Heart left ventricle (tissue), 16 donors: ENCODE measurements at regions of chr7 and their contacts with region 1.

Region 1: DNA sequence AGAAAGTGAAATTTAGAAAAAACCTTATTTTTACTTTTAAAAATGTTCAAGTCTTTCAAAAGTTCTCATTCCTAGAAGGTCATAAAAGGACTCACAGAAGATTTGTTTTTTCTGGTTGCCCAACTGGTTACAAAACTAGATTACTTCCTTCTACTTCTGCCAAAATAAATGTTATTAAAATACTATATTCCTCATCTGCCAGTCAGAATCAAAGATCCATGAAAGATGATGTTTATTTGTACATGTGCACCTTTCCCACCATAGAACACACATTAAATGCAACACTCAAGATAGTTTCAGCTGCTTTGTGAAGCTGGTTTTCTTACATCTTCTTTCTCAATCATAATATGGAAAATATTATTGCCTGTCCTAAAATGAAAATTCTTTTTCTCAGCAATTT is 465.4 kb downstream of the ETV1 start:
- DNase-seq: no peak
- ATAC-seq: no peak
- H3K4me3 ChIP-seq: peak overlapping the region in 1 of 12 donors; percentile 10
- H3K27ac ChIP-seq: no peak overlapping the region
- H3K4me1 ChIP-seq: no peaks in the 10 kb centered on the region
- H3K27me3 ChIP-seq: no peaks in the 10 kb centered on the region
- CTCF ChIP-seq: no peak
- POLR2A ChIP-seq: no peak

Region 2: DNA sequence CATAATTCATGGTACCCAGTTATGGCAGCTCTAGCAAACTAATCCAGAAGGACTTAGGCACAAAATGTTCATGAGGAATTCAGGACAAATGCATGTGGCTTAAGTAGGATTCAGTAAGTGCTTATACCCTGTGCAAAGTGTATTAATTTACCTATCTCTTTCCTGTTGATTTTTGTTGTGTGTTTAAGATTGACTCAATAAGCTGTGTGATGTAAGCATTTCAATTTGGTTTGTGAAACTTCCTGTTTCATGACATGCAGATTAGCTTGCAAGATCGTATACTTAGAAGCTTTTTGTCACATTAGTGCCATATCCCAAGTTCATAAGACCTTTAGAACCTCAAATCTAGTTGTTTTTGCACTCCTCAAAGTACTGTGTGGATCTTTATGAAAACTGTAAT is 419.9 kb before region 1 on chr7:
- intact Hi-C with region 1: no loop called
- DNase-seq: no peak
- ATAC-seq: no peak
- H3K4me3 ChIP-seq: no peak overlapping the region
- H3K27ac ChIP-seq: no peak overlapping the region
- H3K4me1 ChIP-seq: no peaks in the 10 kb centered on the region
- H3K27me3 ChIP-seq: no peaks in the 10 kb centered on the region
- CTCF ChIP-seq: no peak
- POLR2A ChIP-seq: no peak

Region 3: DNA sequence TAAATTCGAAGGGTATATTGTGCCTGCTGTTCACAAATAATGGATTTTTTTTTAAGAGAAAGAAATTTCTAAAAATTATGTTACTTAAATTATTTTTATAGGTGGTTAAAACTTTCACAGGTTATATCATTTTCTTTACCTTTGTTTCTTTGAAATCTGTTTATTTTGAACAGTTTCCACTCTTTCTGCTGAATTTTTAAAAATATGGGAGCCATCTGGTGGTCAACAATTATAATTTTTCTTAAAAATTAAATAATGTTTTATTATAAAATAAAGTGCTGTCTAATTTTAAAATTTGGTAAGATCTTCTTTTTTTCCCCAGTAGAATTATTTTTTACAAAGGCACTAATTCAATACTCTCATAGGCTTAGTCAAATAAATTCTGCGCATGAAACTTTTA is 201.5 kb after region 1 on chr7:
- intact Hi-C with region 1: loop called in 1 of 10 experiments (anchors 10 kb)
- DNase-seq: no peak
- ATAC-seq: no peak
- H3K4me3 ChIP-seq: no peak overlapping the region
- H3K27ac ChIP-seq: no peak overlapping the region
- H3K4me1 ChIP-seq: no peaks in the 10 kb centered on the region
- H3K27me3 ChIP-seq: no peaks in the 10 kb centered on the region
- CTCF ChIP-seq: peak in 5 of 12 donors; percentile 7 to 29 (median 9)
- POLR2A ChIP-seq: no peak

Region 4: DNA sequence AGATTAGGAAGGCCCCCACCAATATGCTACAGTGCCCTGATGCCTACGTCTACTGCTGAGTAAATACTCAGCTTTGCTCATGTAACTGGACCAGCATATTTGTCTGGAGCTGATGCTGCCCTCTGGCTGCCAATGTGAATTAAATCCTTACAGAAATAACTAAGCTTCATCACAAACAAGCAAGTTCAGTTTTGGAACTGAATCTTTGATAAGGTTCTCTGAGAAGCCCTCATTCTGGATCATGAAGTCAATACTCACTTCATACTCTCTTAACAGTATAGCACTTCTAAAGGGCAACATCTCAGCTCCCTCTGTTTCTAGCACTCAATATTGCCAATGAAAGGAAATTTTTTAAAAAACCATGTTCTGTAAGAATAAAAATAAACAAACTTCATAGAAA is 218.7 kb after region 1 on chr7:
- intact Hi-C with region 1: loop called in 4 of 10 experiments (anchors 5 to 10 kb)
- DNase-seq: peak in 3 of 5 donors; percentile 16 to 48 (median 29)
- ATAC-seq: peak in 3 of 4 donors; percentile 75 to 79 (median 78)
- H3K4me3 ChIP-seq: no peak overlapping the region
- H3K27ac ChIP-seq: peak overlapping the region in 1 of 12 donors; percentile 12
- H3K4me1 ChIP-seq: peaks cover 0 to 13% (median 7%) of the 10 kb centered on the region in 12 donors
- H3K27me3 ChIP-seq: no peaks in the 10 kb centered on the region
- CTCF ChIP-seq: peak; percentile 24 to 66 (median 52)
- POLR2A ChIP-seq: no peak

Region 5: GRCh38 chr7:14457568-14458453 is 933.7 kb after region 1 on chr7:
- intact Hi-C with region 1: loop called in 4 of 10 experiments (anchors 5 to 10 kb)
- DNase-seq: peak; percentile 66 to 72 (median 68)
- ATAC-seq: peak; percentile 73 to 85 (median 84)
- H3K4me3 ChIP-seq: peak overlapping the region in 3 of 12 donors; percentile 1 to 31 (median 22)
- H3K27ac ChIP-seq: peak overlapping the region in 2 of 12 donors; percentile 34 to 54
- H3K4me1 ChIP-seq: peaks cover 0 to 5% (median 0%) of the 10 kb centered on the region in 12 donors
- H3K27me3 ChIP-seq: no peaks in the 10 kb centered on the region
- CTCF ChIP-seq: peak; percentile 81 to 93 (median 88)
- POLR2A ChIP-seq: no peak

Region 6: DNA sequence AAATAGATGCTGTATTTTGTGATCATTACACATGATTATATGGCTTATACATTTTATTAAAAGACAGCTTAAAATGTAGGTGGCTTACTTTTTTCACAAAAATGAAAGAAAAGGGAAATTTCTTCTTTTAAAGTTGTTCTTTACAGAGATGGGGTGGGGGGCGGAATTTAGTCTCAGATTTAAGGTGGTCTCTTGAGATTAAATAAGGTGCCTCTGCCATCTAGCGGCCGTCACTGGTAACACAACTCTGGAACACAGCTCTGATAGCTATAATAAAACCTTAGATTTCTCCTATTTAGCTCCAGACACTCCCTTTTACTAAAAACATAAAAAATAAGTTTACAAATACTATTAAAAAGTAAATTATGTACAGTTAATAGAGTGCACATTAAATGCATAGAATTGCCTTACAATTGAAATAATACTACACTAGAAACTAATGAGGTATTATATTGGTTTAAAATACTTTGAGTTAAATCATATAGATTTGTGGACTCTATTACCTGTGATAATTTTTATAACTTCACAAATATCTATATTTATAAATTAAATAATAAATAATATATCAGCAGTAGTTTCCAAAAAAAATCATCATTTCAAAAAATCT is 1167.6 kb after region 1 on chr7:
- intact Hi-C with region 1: loop called in 4 of 10 experiments (anchors 10 kb)
- DNase-seq: peak; percentile 10 to 58 (median 33)
- ATAC-seq: no peak
- H3K4me3 ChIP-seq: no peak overlapping the region
- H3K27ac ChIP-seq: no peak overlapping the region
- H3K4me1 ChIP-seq: peaks cover 0 to 23% (median 0%) of the 10 kb centered on the region in 12 donors
- H3K27me3 ChIP-seq: peaks cover 0 to 3% (median 0%) of the 10 kb centered on the region in 9 donors
- CTCF ChIP-seq: peak; percentile 74 to 92 (median 86)
- POLR2A ChIP-seq: no peak